ENCODE measurements at regions of chr5 and their contacts with region 1.

Region 1: GRCh38 chr5:81851481-81852178 is 100.7 kb upstream of the SSBP2 start:
- DNase-seq: peak; percentile 62
- H3K4me3 ChIP-seq: peak overlapping the region; percentile 26 to 73 (median 49)
- H3K27ac ChIP-seq: peak overlapping the region; percentile 71 to 94 (median 86)
- H3K4me1 ChIP-seq: peaks cover 23 to 91% (median 37%) of the 10 kb centered on the region in 3 donors
- H3K27me3 ChIP-seq: no peaks in the 10 kb centered on the region
- CTCF ChIP-seq: peak in 2 of 6 experiments; percentile 10 to 22
- POLR2A ChIP-seq: peak in 1 of 4 donors; percentile 52

Region 2: DNA sequence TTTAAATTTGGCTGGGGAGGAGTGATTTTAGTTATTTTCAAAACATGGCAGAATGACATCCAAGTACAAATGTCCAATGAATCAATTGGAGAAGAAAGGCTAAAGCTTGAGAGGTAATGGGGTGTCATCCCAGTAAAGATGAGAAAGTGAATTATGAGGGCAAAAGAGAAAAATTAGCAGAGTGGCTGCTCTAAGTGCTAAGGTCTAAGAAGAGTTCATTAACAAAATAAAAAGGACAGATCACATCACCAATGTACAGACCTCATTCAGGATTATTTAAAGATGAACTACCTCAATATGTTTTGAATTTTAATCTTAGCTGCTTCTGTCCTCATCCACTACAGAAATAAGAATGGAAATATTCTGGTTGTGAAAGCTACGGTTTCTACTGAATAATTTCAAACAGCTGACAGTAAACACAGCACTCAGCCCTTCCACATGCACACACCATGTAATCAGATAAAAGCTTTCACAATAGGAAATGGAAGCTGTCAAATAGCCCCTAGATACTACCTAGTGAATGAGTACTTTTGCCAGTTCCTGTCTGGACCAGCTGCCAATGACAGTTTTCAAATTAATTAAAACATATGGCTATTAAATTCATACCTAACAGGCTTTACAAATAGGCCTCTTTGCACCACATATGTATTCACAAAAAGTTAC is 272.2 kb before region 1 on chr5:
- intact Hi-C with region 1: no loop called
- DNase-seq: no peak
- H3K4me3 ChIP-seq: no peak overlapping the region
- H3K27ac ChIP-seq: no peak overlapping the region
- H3K4me1 ChIP-seq: no peaks in the 10 kb centered on the region
- H3K27me3 ChIP-seq: no peaks in the 10 kb centered on the region
- CTCF ChIP-seq: no peak
- POLR2A ChIP-seq: no peak

Region 3: GRCh38 chr5:81773574-81773973 is 78.1 kb before region 1 on chr5:
- intact Hi-C with region 1: no loop called
- DNase-seq: no peak
- H3K4me3 ChIP-seq: no peak overlapping the region
- H3K27ac ChIP-seq: peak overlapping the region in 3 of 4 donors; percentile 2 to 53 (median 45)
- H3K4me1 ChIP-seq: peaks cover 0 to 26% (median 11%) of the 10 kb centered on the region in 3 donors
- H3K27me3 ChIP-seq: no peaks in the 10 kb centered on the region
- CTCF ChIP-seq: no peak
- POLR2A ChIP-seq: no peak

Region 4: GRCh38 chr5:81787474-81788242 is 64.0 kb before region 1 on chr5:
- intact Hi-C with region 1: loop called (anchors 5 kb)
- DNase-seq: no peak
- H3K4me3 ChIP-seq: peak overlapping the region in 1 of 4 donors; percentile 27
- H3K27ac ChIP-seq: peak overlapping the region; percentile 12 to 81 (median 60)
- H3K4me1 ChIP-seq: peaks cover 16 to 49% (median 30%) of the 10 kb centered on the region in 3 donors
- H3K27me3 ChIP-seq: no peaks in the 10 kb centered on the region
- CTCF ChIP-seq: no peak
- POLR2A ChIP-seq: no peak

Measured in esophagus squamous epithelium (tissue), 5 donors.